ENCODE measurements at regions of chr14 and their contacts with region 1.

Region 1: DNA sequence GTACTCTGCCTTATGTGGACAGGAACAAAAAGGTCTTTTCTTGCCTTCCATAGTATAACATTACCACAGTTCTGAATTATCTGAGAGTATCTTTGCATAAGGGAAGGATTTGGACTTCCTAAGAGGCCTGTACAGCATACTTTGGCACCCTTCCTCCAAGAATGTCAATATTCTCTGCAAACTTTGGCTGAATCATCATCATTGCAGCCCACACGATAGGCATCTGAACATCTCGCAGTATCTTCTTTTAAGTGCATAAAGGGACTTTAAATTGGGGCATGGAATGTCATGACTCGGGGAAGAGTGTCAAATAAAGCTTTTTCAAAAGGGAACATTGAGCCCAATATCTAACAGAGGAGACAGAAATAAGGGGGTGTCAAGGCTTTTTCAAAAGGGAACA is 646.2 kb upstream of the STXBP6 start:
- DNase-seq: no peak
- ATAC-seq: no peak
- H3K4me3 ChIP-seq: no peak overlapping the region
- H3K27ac ChIP-seq: no peak overlapping the region
- H3K4me1 ChIP-seq: no peaks in the 10 kb centered on the region
- H3K27me3 ChIP-seq: no peaks in the 10 kb centered on the region
- CTCF ChIP-seq: no peak
- EP300 ChIP-seq: no peak
- POLR2A ChIP-seq: no peak
- RAD21 ChIP-seq: no peak

Region 2: GRCh38 chr14:26663506-26663905 is 967.3 kb after region 1 on chr14:
- CTCF ChIA-PET with region 1: no interaction called
- POLR2A ChIA-PET with region 1: no interaction called
- RAD21 ChIA-PET with region 1: no interaction called
- SMC1A ChIA-PET with region 1: no interaction called
- in situ Hi-C with region 1: no loop called
- intact Hi-C with region 1: loop called (anchors 5 kb)
- DNase-seq: no peak
- ATAC-seq: no peak
- H3K4me3 ChIP-seq: no peak overlapping the region
- H3K27ac ChIP-seq: no peak overlapping the region
- H3K4me1 ChIP-seq: no peaks in the 10 kb centered on the region
- H3K27me3 ChIP-seq: no peaks in the 10 kb centered on the region
- CTCF ChIP-seq: no peak
- EP300 ChIP-seq: no peak
- POLR2A ChIP-seq: no peak
- RAD21 ChIP-seq: no peak